Sigmoid colon (tissue), 7 donors: ENCODE measurements at regions of chr7 and their contacts with region 1.

Region 1: GRCh38 chr7:116809636-116810266 is 52.6 kb upstream of the CAPZA2 start:
- DNase-seq: no peak
- H3K4me3 ChIP-seq: no peak overlapping the region
- H3K27ac ChIP-seq: no peak overlapping the region
- H3K4me1 ChIP-seq: peaks cover 0 to 19% (median 15%) of the 10 kb centered on the region in 4 donors
- H3K27me3 ChIP-seq: no peaks in the 10 kb centered on the region
- CTCF ChIP-seq: peak in 3 of 4 experiments; percentile 46 to 63 (median 58)
- EP300 ChIP-seq: no peak
- POLR2A ChIP-seq: no peak

Region 2: GRCh38 chr7:116173051-116174028 is 636.4 kb before region 1 on chr7:
- intact Hi-C with region 1: loop called (anchors 5 kb)
- DNase-seq: no peak
- H3K4me3 ChIP-seq: no peak overlapping the region
- H3K27ac ChIP-seq: peak overlapping the region in 1 of 4 donors; percentile 38
- H3K4me1 ChIP-seq: peaks cover 0 to 14% (median 4%) of the 10 kb centered on the region in 4 donors
- H3K27me3 ChIP-seq: no peaks in the 10 kb centered on the region
- CTCF ChIP-seq: peak; percentile 21 to 52 (median 46)
- EP300 ChIP-seq: no peak
- POLR2A ChIP-seq: no peak

Region 3: DNA sequence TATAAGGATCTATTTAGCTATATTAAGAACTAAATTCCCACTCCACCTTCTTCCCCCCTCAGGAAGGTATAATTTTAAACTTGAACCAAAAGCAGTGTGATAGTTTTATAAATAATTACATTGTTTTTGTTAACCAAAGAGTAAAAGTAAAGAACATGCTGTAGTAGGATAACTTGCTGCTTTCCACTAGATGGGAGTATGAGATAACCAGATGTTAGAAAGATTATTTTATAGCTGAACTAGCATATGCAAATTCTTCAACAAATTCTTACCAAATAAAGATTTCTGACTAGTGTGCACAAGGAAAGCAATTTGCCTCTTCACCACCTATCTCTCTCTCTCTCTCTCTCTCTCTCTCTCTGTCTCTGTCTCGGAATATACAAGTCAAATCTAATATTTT is 567.6 kb before region 1 on chr7:
- intact Hi-C with region 1: loop called (anchors 5 kb)
- DNase-seq: no peak
- H3K4me3 ChIP-seq: peak overlapping the region in 1 of 4 donors; percentile 0
- H3K27ac ChIP-seq: peak overlapping the region; percentile 45 to 97 (median 90)
- H3K4me1 ChIP-seq: peaks cover 0 to 64% (median 36%) of the 10 kb centered on the region in 4 donors
- H3K27me3 ChIP-seq: no peaks in the 10 kb centered on the region
- CTCF ChIP-seq: no peak
- EP300 ChIP-seq: no peak
- POLR2A ChIP-seq: no peak

Region 4: GRCh38 chr7:116258734-116259133 is 551.0 kb before region 1 on chr7:
- intact Hi-C with region 1: loop called (anchors 5 kb)
- DNase-seq: no peak
- H3K4me3 ChIP-seq: no peak overlapping the region
- H3K27ac ChIP-seq: peak overlapping the region; percentile 52 to 70 (median 60)
- H3K4me1 ChIP-seq: peaks cover 0 to 45% (median 17%) of the 10 kb centered on the region in 4 donors
- H3K27me3 ChIP-seq: no peaks in the 10 kb centered on the region
- CTCF ChIP-seq: peak; percentile 69 to 88 (median 78)
- EP300 ChIP-seq: no peak
- POLR2A ChIP-seq: no peak

Region 5: GRCh38 chr7:116525913-116526861 is 283.6 kb before region 1 on chr7:
- intact Hi-C with region 1: loop called (anchors 5 kb)
- DNase-seq: peak; percentile 93
- H3K4me3 ChIP-seq: peak overlapping the region; percentile 69 to 89 (median 80)
- H3K27ac ChIP-seq: peak overlapping the region; percentile 94 to 99 (median 98)
- H3K4me1 ChIP-seq: peaks cover 0 to 40% (median 24%) of the 10 kb centered on the region in 4 donors
- H3K27me3 ChIP-seq: no peaks in the 10 kb centered on the region
- CTCF ChIP-seq: peak in 3 of 4 experiments; percentile 14 to 88 (median 42)
- EP300 ChIP-seq: no peak
- POLR2A ChIP-seq: peak in 1 of 2 donors; percentile 63

Region 6: GRCh38 chr7:116671681-116672595 is 137.8 kb before region 1 on chr7 and contains the start of gene MET:
- intact Hi-C with region 1: loop called (anchors 2 kb)
- DNase-seq: peak; percentile 85
- H3K4me3 ChIP-seq: peak within 1 kb of the TSS; percentile 51 to 74 (median 67)
- H3K27ac ChIP-seq: peak within 1 kb of the TSS; percentile 80 to 83 (median 82)
- H3K4me1 ChIP-seq: peaks cover 0 to 26% (median 10%) of the 10 kb centered on the region in 4 donors
- H3K27me3 ChIP-seq: no peaks in the 10 kb centered on the region
- CTCF ChIP-seq: peak; percentile 47 to 58 (median 53)
- EP300 ChIP-seq: no peak
- POLR2A ChIP-seq: no peak
- total RNA-seq, gene MET: 15.9 to 21.6 (median 18.6) TPM